CD8-positive, alpha-beta T cell (primary cell): ENCODE measurements at regions of chr9 and their contacts with region 1.

Region 1: DNA sequence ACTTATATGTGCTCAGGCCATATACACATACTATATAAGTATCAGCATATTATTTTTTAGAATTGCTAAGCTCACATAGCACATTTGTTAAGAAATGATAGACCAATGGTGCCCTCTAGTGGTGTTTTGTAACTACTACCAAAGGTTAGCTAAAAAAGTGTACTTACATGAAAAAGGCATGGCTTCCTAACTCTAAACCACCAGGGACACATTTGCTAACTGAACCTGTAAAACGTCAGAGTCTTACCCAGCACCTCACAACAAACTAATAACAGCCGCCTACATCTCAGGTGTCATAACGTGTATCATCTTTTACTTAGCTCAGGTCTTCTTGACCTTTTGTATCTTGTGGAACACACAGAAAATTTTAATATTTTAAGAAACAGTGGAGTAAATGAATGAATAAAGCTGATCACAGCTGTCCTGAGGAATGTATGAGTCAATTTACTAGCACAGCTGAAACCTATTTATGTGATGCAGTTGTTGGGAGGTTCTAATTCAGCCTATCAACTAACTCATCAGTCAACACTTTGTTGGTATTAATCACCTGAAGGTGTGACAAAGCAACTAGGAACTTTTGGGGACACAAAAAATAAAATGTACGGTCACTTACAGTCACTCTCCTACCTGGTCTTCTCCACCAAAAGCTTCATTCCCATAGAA is 72.9 kb downstream of the BAAT start:
- DNase-seq: peak in 3 of 9 experiments; percentile 11 to 74 (median 65)
- ATAC-seq: peak; percentile 59
- H3K4me3 ChIP-seq: no peak overlapping the region
- H3K4me3 Mint-ChIP-seq: no peak overlapping the region
- H3K27ac ChIP-seq: no peak overlapping the region
- H3K27ac Mint-ChIP-seq: no peak overlapping the region
- H3K4me1 ChIP-seq: no peaks in the 10 kb centered on the region
- H3K4me1 Mint-ChIP-seq: no peaks in the 10 kb centered on the region
- H3K27me3 ChIP-seq: no peaks in the 10 kb centered on the region
- H3K27me3 Mint-ChIP-seq: peaks cover 11% of the 10 kb centered on the region
- CTCF ChIP-seq: peak; percentile 73

Region 2: GRCh38 chr9:100028201-100028784 is 1283.6 kb before region 1 on chr9:
- CTCF ChIA-PET with region 1: no interaction called
- POLR2A ChIA-PET with region 1: no interaction called
- intact Hi-C with region 1: loop called in 1 of 2 experiments (anchors 5 kb)
- DNase-seq: peak; percentile 47 to 75 (median 66)
- ATAC-seq: peak; percentile 97
- H3K4me3 ChIP-seq: no peak overlapping the region
- H3K4me3 Mint-ChIP-seq: no peak overlapping the region
- H3K27ac ChIP-seq: no peak overlapping the region
- H3K27ac Mint-ChIP-seq: no peak overlapping the region
- H3K4me1 ChIP-seq: no peaks in the 10 kb centered on the region
- H3K4me1 Mint-ChIP-seq: peaks cover 3% of the 10 kb centered on the region
- H3K27me3 ChIP-seq: no peaks in the 10 kb centered on the region
- H3K27me3 Mint-ChIP-seq: no peaks in the 10 kb centered on the region
- CTCF ChIP-seq: peak; percentile 73

Region 3: DNA sequence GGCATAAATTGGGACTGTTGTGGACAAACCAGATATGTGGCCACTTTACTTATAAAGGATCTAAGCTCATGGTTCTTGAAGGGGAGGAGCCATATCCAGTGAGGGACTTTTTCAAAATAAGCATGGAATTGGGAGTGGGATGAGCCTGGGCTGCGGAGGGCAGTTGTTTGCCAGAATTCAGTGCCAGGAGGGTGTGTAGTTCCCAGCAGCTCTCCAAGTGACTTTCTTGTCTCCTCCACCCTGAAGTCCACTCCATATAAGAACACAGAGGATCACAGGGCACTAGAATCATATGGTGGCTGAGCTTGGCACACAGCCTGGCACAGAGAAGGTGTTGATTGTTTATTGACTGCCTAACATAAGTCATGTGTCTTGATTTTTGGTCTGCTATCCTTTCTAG is 612.9 kb before region 1 on chr9:
- CTCF ChIA-PET with region 1: interaction called, 3 read pairs
- POLR2A ChIA-PET with region 1: no interaction called
- intact Hi-C with region 1: loop called in 1 of 2 experiments (anchors 5 kb)
- DNase-seq: no peak
- ATAC-seq: no peak
- H3K4me3 ChIP-seq: no peak overlapping the region
- H3K4me3 Mint-ChIP-seq: no peak overlapping the region
- H3K27ac ChIP-seq: no peak overlapping the region
- H3K27ac Mint-ChIP-seq: no peak overlapping the region
- H3K4me1 ChIP-seq: no peaks in the 10 kb centered on the region
- H3K4me1 Mint-ChIP-seq: no peaks in the 10 kb centered on the region
- H3K27me3 ChIP-seq: no peaks in the 10 kb centered on the region
- H3K27me3 Mint-ChIP-seq: peaks cover 3% of the 10 kb centered on the region
- CTCF ChIP-seq: no peak

Region 4: GRCh38 chr9:100714372-100715099 is 597.4 kb before region 1 on chr9:
- CTCF ChIA-PET with region 1: no interaction called
- POLR2A ChIA-PET with region 1: no interaction called
- intact Hi-C with region 1: loop called in 1 of 2 experiments (anchors 5 kb)
- DNase-seq: peak in 5 of 9 experiments; percentile 7 to 31 (median 19)
- ATAC-seq: no peak
- H3K4me3 ChIP-seq: no peak overlapping the region
- H3K4me3 Mint-ChIP-seq: no peak overlapping the region
- H3K27ac ChIP-seq: no peak overlapping the region
- H3K27ac Mint-ChIP-seq: no peak overlapping the region
- H3K4me1 ChIP-seq: no peaks in the 10 kb centered on the region
- H3K4me1 Mint-ChIP-seq: no peaks in the 10 kb centered on the region
- H3K27me3 ChIP-seq: no peaks in the 10 kb centered on the region
- H3K27me3 Mint-ChIP-seq: peaks cover 13% of the 10 kb centered on the region
- CTCF ChIP-seq: peak; percentile 33

Region 5: GRCh38 chr9:101325053-101325452 is 13.2 kb after region 1 on chr9:
- CTCF ChIA-PET with region 1: interaction called, 13 read pairs
- POLR2A ChIA-PET with region 1: no interaction called
- intact Hi-C with region 1: no loop called
- DNase-seq: no peak
- ATAC-seq: no peak
- H3K4me3 ChIP-seq: no peak overlapping the region
- H3K4me3 Mint-ChIP-seq: no peak overlapping the region
- H3K27ac ChIP-seq: no peak overlapping the region
- H3K27ac Mint-ChIP-seq: no peak overlapping the region
- H3K4me1 ChIP-seq: no peaks in the 10 kb centered on the region
- H3K4me1 Mint-ChIP-seq: no peaks in the 10 kb centered on the region
- H3K27me3 ChIP-seq: no peaks in the 10 kb centered on the region
- H3K27me3 Mint-ChIP-seq: peaks cover 17% of the 10 kb centered on the region
- CTCF ChIP-seq: no peak